PC-3 (cell line): ENCODE measurements at regions of chr1 and their contacts with region 1.

Region 1: GRCh38 chr1:218171285-218171893 is 113.7 kb upstream of the RRP15 start:
- DNase-seq: peak; percentile 87
- ATAC-seq: peak; percentile 57
- H3K4me3 ChIP-seq: no peak overlapping the region
- H3K27ac ChIP-seq: no peak overlapping the region
- H3K4me1 ChIP-seq: no peaks in the 10 kb centered on the region
- H3K27me3 ChIP-seq: peaks cover 35% of the 10 kb centered on the region
- CTCF ChIP-seq: peak; percentile 99

Region 2: GRCh38 chr1:217275655-217276398 is 895.6 kb before region 1 on chr1:
- CTCF ChIA-PET with region 1: no interaction called
- POLR2A ChIA-PET with region 1: no interaction called
- intact Hi-C with region 1: loop called (anchors 5 kb)
- DNase-seq: peak; percentile 96
- ATAC-seq: peak; percentile 67
- H3K4me3 ChIP-seq: peak overlapping the region; percentile 50
- H3K27ac ChIP-seq: peak overlapping the region; percentile 92
- H3K4me1 ChIP-seq: peaks cover 48% of the 10 kb centered on the region
- H3K27me3 ChIP-seq: no peaks in the 10 kb centered on the region
- CTCF ChIP-seq: no peak

Region 3: DNA sequence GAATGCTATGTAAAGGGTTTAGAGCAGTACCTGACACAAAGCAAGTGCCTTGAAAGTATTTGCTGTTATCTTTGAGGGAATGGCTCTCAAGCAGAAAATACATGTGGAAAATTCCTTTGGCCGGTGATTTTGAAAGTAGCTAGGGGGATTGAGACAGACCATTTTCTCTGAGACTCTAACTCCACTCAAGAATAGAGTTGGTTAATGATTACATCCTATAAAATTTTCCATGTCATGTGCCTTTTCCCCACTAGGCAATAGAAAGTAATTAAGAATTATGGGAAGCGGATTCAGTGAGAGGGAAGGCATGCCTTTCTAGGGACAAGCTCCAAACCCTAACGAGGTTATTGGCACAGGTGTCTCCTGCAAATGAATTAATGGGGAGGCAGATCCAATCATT is 816.5 kb before region 1 on chr1:
- CTCF ChIA-PET with region 1: no interaction called
- POLR2A ChIA-PET with region 1: no interaction called
- intact Hi-C with region 1: loop called (anchors 5 kb)
- DNase-seq: no peak
- ATAC-seq: no peak
- H3K4me3 ChIP-seq: no peak overlapping the region
- H3K27ac ChIP-seq: no peak overlapping the region
- H3K4me1 ChIP-seq: no peaks in the 10 kb centered on the region
- H3K27me3 ChIP-seq: no peaks in the 10 kb centered on the region
- CTCF ChIP-seq: no peak

Region 4: GRCh38 chr1:217590598-217590997 is 580.8 kb before region 1 on chr1:
- CTCF ChIA-PET with region 1: interaction called, 3 read pairs
- POLR2A ChIA-PET with region 1: no interaction called
- intact Hi-C with region 1: loop called (anchors 5 kb)
- DNase-seq: peak; percentile 19
- ATAC-seq: peak; percentile 53; the same call in 1 of the 2 replicates
- H3K4me3 ChIP-seq: no peak overlapping the region
- H3K27ac ChIP-seq: no peak overlapping the region
- H3K4me1 ChIP-seq: no peaks in the 10 kb centered on the region
- H3K27me3 ChIP-seq: no peaks in the 10 kb centered on the region
- CTCF ChIP-seq: peak; percentile 65

Region 5: DNA sequence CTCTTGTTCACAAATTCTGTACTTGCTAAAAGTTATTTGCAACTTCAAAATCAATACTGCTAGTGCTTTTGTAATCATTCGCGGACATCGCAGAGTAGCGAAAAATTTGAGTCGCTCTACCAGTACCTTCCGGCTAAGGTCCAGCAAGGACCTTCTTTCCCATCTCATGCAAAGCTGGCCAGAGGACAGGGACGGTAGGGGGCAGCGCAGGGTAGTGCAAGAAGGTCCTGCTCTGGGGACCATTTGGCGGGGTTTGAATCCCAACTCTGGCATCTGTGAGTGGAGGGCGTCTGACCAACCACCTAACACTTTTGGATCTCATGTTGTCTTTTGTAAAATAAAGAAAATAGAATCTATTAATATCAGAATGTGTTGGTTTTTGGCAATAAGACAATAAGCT is 282.0 kb before region 1 on chr1:
- CTCF ChIA-PET with region 1: interaction called, 4 read pairs
- POLR2A ChIA-PET with region 1: no interaction called
- intact Hi-C with region 1: loop called (anchors 1 kb)
- DNase-seq: peak; percentile 78
- ATAC-seq: no peak
- H3K4me3 ChIP-seq: no peak overlapping the region
- H3K27ac ChIP-seq: no peak overlapping the region
- H3K4me1 ChIP-seq: peaks cover 24% of the 10 kb centered on the region
- H3K27me3 ChIP-seq: no peaks in the 10 kb centered on the region
- CTCF ChIP-seq: peak; percentile 94

Region 6: DNA sequence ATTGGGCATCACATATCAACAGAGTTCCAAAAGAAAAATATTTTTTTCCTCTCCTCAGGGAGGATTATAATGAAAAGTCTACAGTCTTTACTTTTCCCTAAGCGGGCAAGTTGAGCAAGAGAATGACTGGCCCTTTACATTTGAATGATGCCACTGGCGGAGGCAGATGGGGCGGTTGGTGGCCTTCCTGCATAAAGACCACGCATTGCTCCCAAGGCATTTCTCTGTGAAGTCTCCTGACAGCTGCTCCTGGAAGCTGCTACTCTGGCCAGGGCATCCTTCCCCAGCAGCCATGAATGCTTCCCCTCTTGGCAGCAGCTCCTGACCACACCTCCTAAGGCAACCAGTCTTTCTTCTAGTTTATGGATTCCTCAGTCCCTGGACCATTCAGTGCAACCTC is 47.4 kb before region 1 on chr1:
- CTCF ChIA-PET with region 1: no interaction called
- POLR2A ChIA-PET with region 1: no interaction called
- intact Hi-C with region 1: no loop called
- DNase-seq: no peak
- ATAC-seq: peak; percentile 24; the same call in 1 of the 2 replicates
- H3K4me3 ChIP-seq: no peak overlapping the region
- H3K27ac ChIP-seq: no peak overlapping the region
- H3K4me1 ChIP-seq: no peaks in the 10 kb centered on the region
- H3K27me3 ChIP-seq: no peaks in the 10 kb centered on the region
- CTCF ChIP-seq: no peak

Region 7: DNA sequence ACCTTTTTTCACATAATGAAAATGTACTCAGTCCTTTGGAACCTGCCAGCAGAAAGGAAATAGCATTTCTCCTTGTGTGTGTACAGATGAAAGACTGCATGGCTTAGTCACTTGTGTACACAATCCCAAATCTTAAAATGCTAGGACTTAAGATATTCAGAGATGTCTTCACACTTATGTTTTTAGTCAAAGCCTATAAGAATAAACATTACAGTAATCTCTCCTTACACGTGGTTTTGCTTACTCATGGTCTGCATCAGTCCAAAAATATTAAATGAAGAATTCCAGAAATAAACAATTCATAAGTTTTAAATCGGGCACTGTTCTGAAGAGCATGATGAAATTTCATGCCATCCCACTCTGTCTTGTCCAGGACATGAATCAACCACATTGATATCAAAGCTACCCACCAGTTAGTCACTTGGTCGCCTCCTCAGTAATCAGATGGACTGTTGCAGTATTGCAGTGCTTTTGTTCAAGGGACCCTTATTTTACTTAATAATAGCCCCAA is 38.0 kb after region 1 on chr1:
- CTCF ChIA-PET with region 1: no interaction called
- POLR2A ChIA-PET with region 1: no interaction called
- intact Hi-C with region 1: loop called (anchors 2 kb)
- DNase-seq: peak; percentile 98
- ATAC-seq: peak; percentile 96
- H3K4me3 ChIP-seq: peak overlapping the region; percentile 20; the same call in 1 of the 2 replicates
- H3K27ac ChIP-seq: peak overlapping the region; percentile 52
- H3K4me1 ChIP-seq: peaks cover 34% of the 10 kb centered on the region
- H3K27me3 ChIP-seq: no peaks in the 10 kb centered on the region
- CTCF ChIP-seq: no peak